Calu3 (cell line): ENCODE measurements at regions of chr6 and their contacts with region 1.

Region 1: GRCh38 chr6:96521644-96522464 is at the start of gene UFL1:
- DNase-seq: peak; percentile 93
- H3K4me3 Mint-ChIP-seq: peak within 1 kb of the TSS; percentile 98
- H3K27ac Mint-ChIP-seq: peak within 1 kb of the TSS; percentile 99
- H3K4me1 Mint-ChIP-seq: no peaks in the 10 kb centered on the region
- H3K27me3 Mint-ChIP-seq: no peaks in the 10 kb centered on the region
- CTCF ChIP-seq: no peak
- total RNA-seq, gene UFL1: 16.5 and 19.3 TPM in 2 replicates

Region 2: DNA sequence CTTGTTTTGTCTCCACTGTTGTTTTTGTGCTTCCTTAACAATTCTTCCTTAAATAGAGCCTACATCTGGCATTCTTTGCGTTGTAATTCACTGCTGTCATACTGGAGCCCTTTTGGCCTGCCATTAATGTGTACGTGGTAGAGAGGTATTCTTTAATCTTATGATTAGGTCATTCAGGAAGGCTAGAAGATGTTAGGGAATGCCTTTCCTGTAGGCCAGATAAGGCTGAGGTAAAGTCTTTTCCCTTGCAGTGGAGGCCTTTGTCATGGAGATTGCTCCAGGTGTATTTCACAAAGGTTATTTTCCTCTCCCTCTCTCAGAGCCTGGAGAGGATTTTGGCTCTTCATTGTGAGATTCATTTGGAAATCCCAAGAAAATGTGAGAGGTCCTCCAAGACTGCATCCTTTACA is 359.1 kb before region 1 on chr6:
- CTCF ChIA-PET with region 1: no interaction called
- intact Hi-C with region 1: loop called (anchors 5 kb)
- DNase-seq: no peak
- H3K4me3 Mint-ChIP-seq: no peak overlapping the region
- H3K27ac Mint-ChIP-seq: no peak overlapping the region
- H3K4me1 Mint-ChIP-seq: peaks cover 14% of the 10 kb centered on the region
- H3K27me3 Mint-ChIP-seq: no peaks in the 10 kb centered on the region
- CTCF ChIP-seq: no peak

Region 3: GRCh38 chr6:96604420-96604819 is 82.6 kb after region 1 on chr6:
- CTCF ChIA-PET with region 1: no interaction called
- intact Hi-C with region 1: no loop called
- DNase-seq: no peak
- H3K4me3 Mint-ChIP-seq: no peak overlapping the region
- H3K27ac Mint-ChIP-seq: no peak overlapping the region
- H3K4me1 Mint-ChIP-seq: no peaks in the 10 kb centered on the region
- H3K27me3 Mint-ChIP-seq: no peaks in the 10 kb centered on the region
- CTCF ChIP-seq: no peak